CD14-positive monocyte (primary cell): ENCODE measurements at regions of chr6 and their contacts with region 1.

Region 1: GRCh38 chr6:32933636-32934085 is 7.2 kb downstream of the HLA-DMB start:
- DNase-seq: peak; percentile 58 to 78 (median 76)
- H3K4me3 ChIP-seq: no peak overlapping the region
- H3K4me3 Mint-ChIP-seq: no peak overlapping the region
- H3K27ac ChIP-seq: peak overlapping the region in 1 of 2 donors; percentile 5
- H3K27ac Mint-ChIP-seq: peak overlapping the region in 5 of 7 donors; percentile 22 to 79 (median 37)
- H3K4me1 ChIP-seq: peaks cover 61 to 68% of the 10 kb centered on the region in 2 donors
- H3K4me1 Mint-ChIP-seq: peaks cover 75% of the 10 kb centered on the region
- H3K27me3 ChIP-seq: no peaks in the 10 kb centered on the region
- H3K27me3 Mint-ChIP-seq: peaks cover 0 to 1% (median 1%) of the 10 kb centered on the region in 3 donors
- CTCF ChIP-seq: peak; percentile 88

Region 2: DNA sequence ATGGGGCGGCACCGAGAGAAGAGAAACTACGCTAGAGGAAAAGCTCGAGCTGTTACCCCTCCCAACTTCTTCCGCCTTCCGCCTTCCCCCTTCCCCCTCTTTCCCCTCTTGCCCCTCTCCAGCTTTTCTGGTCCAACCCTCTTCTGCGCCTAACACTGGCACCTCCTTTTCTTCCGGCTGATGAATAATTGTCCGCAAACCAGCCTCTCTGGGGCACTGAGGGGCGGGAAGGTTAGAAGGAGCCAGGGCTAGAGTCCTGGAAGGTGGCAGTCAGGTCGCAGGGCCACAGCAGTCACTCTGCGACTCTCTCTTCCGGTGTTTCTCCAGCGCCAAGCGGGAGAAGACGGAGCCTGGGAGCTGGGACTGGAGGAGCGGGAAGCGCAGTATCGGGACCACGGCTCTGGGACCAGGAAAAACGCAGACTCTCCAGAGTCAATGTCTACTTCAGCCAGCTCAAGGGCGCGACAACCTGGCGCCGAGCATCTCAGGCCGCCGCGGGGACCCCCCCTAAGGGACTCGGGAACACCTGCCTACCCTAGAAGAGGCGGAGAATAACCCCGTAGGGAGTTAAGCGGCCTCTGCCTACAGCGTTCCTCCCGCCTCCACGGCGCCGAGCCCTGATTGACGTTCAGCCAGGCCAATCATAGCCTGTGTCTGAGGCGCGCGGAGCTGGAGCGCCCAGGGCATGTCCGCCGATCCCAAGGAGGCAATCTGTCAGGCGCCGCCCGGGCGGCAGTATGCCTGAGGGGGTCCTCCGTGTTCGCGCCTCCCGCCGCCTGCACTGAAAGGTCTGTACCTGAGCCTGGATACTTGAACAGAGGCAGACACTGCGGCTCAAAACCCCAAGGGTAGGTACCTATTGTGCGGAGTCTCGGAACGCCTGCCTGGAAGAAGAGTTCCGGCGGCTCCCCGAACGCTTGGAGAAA is 39.3 kb before region 1 on chr6:
- intact Hi-C with region 1: loop called (anchors 5 kb)
- DNase-seq: peak; percentile 84 to 90 (median 88)
- H3K4me3 ChIP-seq: peak overlapping the region; percentile 75 to 96 (median 79)
- H3K4me3 Mint-ChIP-seq: peak overlapping the region; percentile 99 to 100
- H3K27ac ChIP-seq: peak overlapping the region; percentile 73 to 82
- H3K27ac Mint-ChIP-seq: peak overlapping the region; percentile 89 to 98 (median 94)
- H3K4me1 ChIP-seq: peaks cover 22 to 42% of the 10 kb centered on the region in 2 donors
- H3K4me1 Mint-ChIP-seq: peaks cover 47% of the 10 kb centered on the region
- H3K27me3 ChIP-seq: no peaks in the 10 kb centered on the region
- H3K27me3 Mint-ChIP-seq: peaks cover 0 to 1% (median 0%) of the 10 kb centered on the region in 3 donors
- CTCF ChIP-seq: no peak